ENCODE measurements at regions of chr7 and their contacts with region 1.

Region 1: DNA sequence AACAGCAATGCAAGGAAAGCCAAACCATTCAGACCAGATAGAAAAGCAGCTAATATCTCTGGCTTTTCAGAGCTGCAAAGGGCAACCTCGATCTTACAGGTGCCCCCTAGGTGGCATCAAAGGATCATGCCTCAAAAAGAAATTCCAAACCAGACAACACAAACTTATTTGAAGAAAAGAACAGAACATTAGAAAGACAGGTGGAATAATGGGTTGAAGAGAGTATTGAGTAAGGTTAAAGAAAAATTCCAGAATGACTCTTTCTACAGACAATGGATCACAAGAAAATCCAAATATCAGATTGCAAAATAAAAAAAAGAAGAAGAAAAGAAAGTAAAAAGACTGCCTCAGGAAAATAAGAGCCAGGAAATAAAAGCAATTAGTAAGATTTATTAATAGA is 213.7 kb downstream of the ELMO1 start:
- H3K4me3 Mint-ChIP-seq: no peak overlapping the region
- H3K27ac Mint-ChIP-seq: no peak overlapping the region
- H3K4me1 Mint-ChIP-seq: peaks cover 15% of the 10 kb centered on the region
- H3K27me3 Mint-ChIP-seq: no peaks in the 10 kb centered on the region

Region 2: DNA sequence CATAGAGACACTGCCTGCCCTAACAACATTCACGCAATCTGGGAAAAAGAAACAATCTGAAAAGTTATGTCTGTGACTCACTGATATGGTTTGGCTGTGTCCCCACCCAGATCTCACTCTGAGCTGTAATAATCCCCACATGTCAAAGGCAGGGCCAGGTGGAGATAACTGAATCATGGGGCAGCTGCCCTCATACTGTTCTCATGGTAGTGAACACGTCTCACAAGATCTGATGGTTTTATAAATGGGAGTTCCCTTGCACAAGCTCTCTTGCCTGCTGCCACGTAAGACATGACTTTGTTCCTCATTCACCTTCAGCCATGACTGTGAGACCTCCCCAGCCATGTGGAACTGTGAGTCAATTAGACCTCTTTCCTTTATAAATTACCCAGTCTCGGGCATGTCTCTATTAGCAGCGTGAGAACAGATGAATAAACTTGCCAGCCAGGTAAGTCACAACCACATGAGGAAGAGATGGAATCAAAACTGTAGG is 169.1 kb before region 1 on chr7:
- intact Hi-C with region 1: no loop called
- H3K4me3 Mint-ChIP-seq: no peak overlapping the region
- H3K27ac Mint-ChIP-seq: no peak overlapping the region
- H3K4me1 Mint-ChIP-seq: peaks cover 20% of the 10 kb centered on the region
- H3K27me3 Mint-ChIP-seq: no peaks in the 10 kb centered on the region

Region 3: DNA sequence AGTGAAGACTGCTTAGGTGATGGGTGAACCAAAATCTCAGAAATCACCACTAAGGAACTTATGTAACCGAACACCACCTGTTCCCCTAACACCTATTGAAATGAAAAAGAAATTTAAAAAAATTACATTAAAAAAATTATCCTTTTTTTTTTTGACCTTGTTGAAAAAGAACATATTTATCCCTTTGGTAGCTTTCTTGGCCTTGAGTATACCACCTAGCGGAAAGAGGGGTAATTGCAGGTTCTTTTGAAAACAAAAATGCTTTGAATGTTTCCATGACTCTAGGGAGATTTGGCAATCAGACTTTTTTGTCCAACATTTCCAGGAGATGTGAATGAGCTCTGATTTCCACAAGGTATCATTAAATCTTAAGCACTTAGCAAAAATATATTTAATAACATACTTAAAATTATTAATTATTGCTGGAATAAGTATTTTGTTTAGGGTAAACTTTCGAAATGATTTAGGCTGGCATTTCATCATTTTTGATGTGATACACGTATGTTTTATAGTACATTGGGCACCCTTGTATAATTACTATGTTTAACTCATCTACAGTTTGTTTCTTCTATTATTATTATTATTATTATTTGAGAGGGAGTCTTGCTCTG is 260.8 kb after region 1 on chr7:
- intact Hi-C with region 1: loop called (anchors 5 kb)
- H3K4me3 Mint-ChIP-seq: no peak overlapping the region
- H3K27ac Mint-ChIP-seq: no peak overlapping the region
- H3K4me1 Mint-ChIP-seq: peaks cover 5% of the 10 kb centered on the region
- H3K27me3 Mint-ChIP-seq: no peaks in the 10 kb centered on the region